T-cell (primary cell): ENCODE measurements at regions of chr15 and their contacts with region 1.

Region 1: DNA sequence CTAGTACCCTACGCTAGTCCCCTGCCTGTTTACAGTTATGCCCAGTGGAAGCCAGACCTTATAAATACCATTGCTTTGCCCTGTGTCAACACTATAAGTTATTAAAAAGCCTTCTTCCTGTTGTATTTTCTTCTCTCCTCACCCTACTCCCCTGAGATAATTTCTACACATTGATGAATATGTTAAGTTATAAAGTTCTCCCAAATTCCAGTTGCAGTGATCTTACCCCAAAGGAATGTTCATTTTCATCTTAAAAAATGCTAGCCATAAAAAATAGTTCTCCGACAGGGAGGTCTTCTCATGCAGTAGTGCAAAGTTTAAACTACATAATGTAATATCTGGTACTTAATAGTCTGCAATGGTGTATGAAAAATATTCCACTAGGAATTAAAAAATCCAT is 58.6 kb downstream of the MAP2K5 start:
- DNase-seq: no peak
- ATAC-seq: no peak
- H3K4me3 ChIP-seq: no peak overlapping the region
- H3K4me3 Mint-ChIP-seq: no peak overlapping the region
- H3K27ac ChIP-seq: no peak overlapping the region
- H3K27ac Mint-ChIP-seq: no peak overlapping the region
- H3K4me1 ChIP-seq: no peaks in the 10 kb centered on the region
- H3K4me1 Mint-ChIP-seq: no peaks in the 10 kb centered on the region
- H3K27me3 ChIP-seq: no peaks in the 10 kb centered on the region
- H3K27me3 Mint-ChIP-seq: no peaks in the 10 kb centered on the region

Region 2: GRCh38 chr15:67349634-67350033 is 251.4 kb before region 1 on chr15:
- CTCF ChIA-PET with region 1: interaction called in 1 of 2 experiments, 15 read pairs
- POLR2A ChIA-PET with region 1: no interaction called
- DNase-seq: no peak
- ATAC-seq: no peak
- H3K4me3 ChIP-seq: no peak overlapping the region
- H3K4me3 Mint-ChIP-seq: no peak overlapping the region
- H3K27ac ChIP-seq: no peak overlapping the region
- H3K27ac Mint-ChIP-seq: no peak overlapping the region
- H3K4me1 ChIP-seq: no peaks in the 10 kb centered on the region
- H3K4me1 Mint-ChIP-seq: no peaks in the 10 kb centered on the region
- H3K27me3 ChIP-seq: no peaks in the 10 kb centered on the region
- H3K27me3 Mint-ChIP-seq: peaks cover 1 to 2% of the 10 kb centered on the region in 2 donors